ENCODE measurements at regions of chr3 and their contacts with region 1.

Region 1: DNA sequence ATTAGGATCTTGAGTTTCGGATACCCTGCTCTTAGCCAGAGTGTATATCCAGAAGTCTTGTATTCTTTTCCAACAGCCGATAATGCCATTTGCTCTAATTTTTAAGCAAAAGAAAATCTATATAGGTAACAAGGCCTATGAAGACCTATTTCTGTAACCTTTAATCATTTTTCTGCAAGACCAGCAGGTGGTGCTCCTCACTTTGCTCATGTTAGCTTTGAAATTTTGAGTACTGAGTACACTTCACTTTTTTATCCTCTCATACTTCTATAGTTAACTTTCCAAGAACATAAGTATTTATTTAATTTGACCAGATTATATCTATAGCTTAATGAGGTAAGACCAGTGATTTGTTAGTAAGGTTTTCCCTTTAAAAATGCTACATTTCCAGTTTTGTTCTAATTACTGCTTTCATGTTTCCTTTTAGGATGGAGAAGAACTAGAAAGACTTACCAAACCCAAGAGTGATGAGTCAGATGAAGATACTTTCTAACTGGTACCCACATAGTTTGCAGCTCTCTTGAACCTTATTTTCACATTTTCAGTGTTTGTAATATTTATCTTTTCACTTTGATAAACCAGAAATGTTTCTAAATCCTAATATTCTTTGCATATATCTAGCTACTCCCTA is 20.5 kb downstream of the SLC35A5 start:
- DNase-seq: peak; percentile 55
- H3K4me3 ChIP-seq: no peak overlapping the region
- H3K27ac ChIP-seq: no peak overlapping the region
- H3K27me3 ChIP-seq: no peaks in the 10 kb centered on the region
- CTCF ChIP-seq: peak; percentile 73

Region 2: GRCh38 chr3:111978493-111979433 is 603.6 kb before region 1 on chr3 and contains the start of gene ABHD10:
- CTCF ChIA-PET with region 1: no interaction called
- POLR2A ChIA-PET with region 1: no interaction called
- DNase-seq: peak; percentile 97
- H3K4me3 ChIP-seq: peak within 1 kb of the TSS; percentile 92
- H3K27ac ChIP-seq: peak within 1 kb of the TSS; percentile 47
- H3K27me3 ChIP-seq: no peaks in the 10 kb centered on the region
- CTCF ChIP-seq: no peak
- polyA plus RNA-seq, gene ABHD10: 28.8 and 37.5 TPM in 2 replicates

Region 3: DNA sequence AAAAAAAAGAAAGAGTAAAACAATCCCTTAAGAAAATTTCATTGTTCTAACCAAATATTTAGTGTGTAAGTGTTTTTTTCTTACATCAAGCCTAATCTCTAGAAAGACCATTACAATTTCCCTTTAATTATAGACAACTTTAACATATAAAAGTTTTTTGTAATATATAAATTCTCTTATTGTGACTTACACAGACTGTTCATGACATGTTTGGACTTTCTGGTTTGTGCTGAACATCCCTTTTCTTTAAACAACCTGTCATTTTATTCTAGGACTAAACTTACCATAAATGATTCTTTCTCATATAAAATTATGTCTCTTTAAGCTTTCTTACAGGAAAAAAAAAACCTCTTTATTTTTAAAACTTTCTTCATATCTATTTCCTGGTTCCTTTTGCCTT is 70.0 kb before region 1 on chr3:
- CTCF ChIA-PET with region 1: no interaction called
- POLR2A ChIA-PET with region 1: no interaction called
- DNase-seq: no peak
- H3K4me3 ChIP-seq: no peak overlapping the region
- H3K27ac ChIP-seq: no peak overlapping the region
- H3K27me3 ChIP-seq: no peaks in the 10 kb centered on the region
- CTCF ChIP-seq: no peak

Region 4: GRCh38 chr3:112561731-112562688 is 20.3 kb before region 1 on chr3 and contains the starts of genes ATG3 and SLC35A5:
- CTCF ChIA-PET with region 1: interaction called, 11 read pairs
- POLR2A ChIA-PET with region 1: no interaction called
- DNase-seq: peak; percentile 98
- H3K4me3 ChIP-seq: peak within 1 kb of the TSS; percentile 95
- H3K27ac ChIP-seq: peak within 1 kb of the TSS; percentile 99
- H3K27me3 ChIP-seq: no peaks in the 10 kb centered on the region
- CTCF ChIP-seq: no peak
- polyA plus RNA-seq, gene ATG3: 44.5 and 60.7 TPM in 2 replicates
- polyA plus RNA-seq, gene SLC35A5: 40.5 and 53.6 TPM in 2 replicates

Region 5: GRCh38 chr3:112598731-112599130 is 16.4 kb after region 1 on chr3:
- CTCF ChIA-PET with region 1: interaction called, 16 read pairs
- POLR2A ChIA-PET with region 1: interaction called, 3 read pairs
- DNase-seq: no peak
- H3K4me3 ChIP-seq: no peak overlapping the region
- H3K27ac ChIP-seq: no peak overlapping the region
- H3K27me3 ChIP-seq: no peaks in the 10 kb centered on the region
- CTCF ChIP-seq: no peak

Region 6: DNA sequence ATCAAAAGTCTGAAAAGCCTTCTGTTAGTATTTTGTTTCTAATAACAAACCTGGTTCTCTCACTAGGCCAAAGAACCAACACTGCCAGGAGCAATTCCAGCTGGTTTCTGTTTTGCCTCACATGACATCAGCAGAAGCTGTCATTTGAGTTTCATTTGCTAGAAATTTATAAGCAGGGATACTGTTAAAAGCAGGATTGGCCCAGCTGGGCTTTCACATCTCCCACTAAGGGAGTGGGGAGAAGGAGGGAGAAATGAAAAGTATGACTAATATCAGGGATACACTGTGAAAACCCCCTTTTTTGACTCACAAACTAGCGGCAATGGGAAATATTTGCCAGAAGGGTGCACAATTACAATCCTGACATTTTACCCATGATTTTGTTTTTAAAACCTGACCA is 53.3 kb after region 1 on chr3:
- CTCF ChIA-PET with region 1: interaction called, 32 read pairs
- POLR2A ChIA-PET with region 1: interaction called, 4 read pairs
- DNase-seq: peak; percentile 90
- H3K4me3 ChIP-seq: peak overlapping the region; percentile 85
- H3K27ac ChIP-seq: peak overlapping the region; percentile 91
- H3K27me3 ChIP-seq: no peaks in the 10 kb centered on the region
- CTCF ChIP-seq: peak; percentile 27; the same call in 1 of the 2 replicates

Region 7: GRCh38 chr3:112979240-112979832 is 397.0 kb after region 1 on chr3:
- CTCF ChIA-PET with region 1: interaction called, 37 read pairs
- POLR2A ChIA-PET with region 1: no interaction called
- DNase-seq: peak; percentile 11
- H3K4me3 ChIP-seq: no peak overlapping the region
- H3K27ac ChIP-seq: no peak overlapping the region
- H3K27me3 ChIP-seq: no peaks in the 10 kb centered on the region
- CTCF ChIP-seq: peak; percentile 69

Region 8: DNA sequence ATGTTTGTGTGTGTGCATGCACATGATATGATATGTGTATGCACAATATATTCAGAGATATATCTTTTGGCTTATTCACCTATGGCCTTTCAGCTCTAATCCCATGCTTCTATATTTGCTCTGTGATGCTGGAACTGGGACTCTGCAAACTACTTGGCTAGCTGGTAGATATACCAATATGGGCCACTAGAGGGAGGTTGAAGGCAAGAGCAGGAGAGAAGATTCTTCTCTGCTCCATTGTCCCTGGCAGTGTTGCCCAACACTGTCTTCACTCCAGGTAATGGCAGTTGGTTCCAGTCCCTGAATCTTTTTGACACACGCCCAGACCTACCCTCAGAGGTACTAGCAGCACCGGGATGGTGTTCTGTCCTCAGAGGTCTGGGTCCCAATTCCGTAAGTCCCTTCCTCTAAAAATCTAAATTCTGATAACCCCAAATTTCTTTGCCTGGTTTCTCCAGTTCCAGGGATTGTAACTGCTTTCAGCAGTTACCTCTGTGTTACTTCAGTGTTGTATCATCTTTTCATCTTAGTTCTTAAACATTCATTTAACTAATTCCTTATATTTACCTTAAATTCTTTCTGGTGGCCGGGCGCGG is 453.1 kb after region 1 on chr3:
- CTCF ChIA-PET with region 1: interaction called, 15 read pairs
- POLR2A ChIA-PET with region 1: no interaction called
- DNase-seq: no peak
- H3K4me3 ChIP-seq: no peak overlapping the region
- H3K27ac ChIP-seq: no peak overlapping the region
- H3K27me3 ChIP-seq: no peaks in the 10 kb centered on the region
- CTCF ChIP-seq: peak; percentile 94

Region 9: DNA sequence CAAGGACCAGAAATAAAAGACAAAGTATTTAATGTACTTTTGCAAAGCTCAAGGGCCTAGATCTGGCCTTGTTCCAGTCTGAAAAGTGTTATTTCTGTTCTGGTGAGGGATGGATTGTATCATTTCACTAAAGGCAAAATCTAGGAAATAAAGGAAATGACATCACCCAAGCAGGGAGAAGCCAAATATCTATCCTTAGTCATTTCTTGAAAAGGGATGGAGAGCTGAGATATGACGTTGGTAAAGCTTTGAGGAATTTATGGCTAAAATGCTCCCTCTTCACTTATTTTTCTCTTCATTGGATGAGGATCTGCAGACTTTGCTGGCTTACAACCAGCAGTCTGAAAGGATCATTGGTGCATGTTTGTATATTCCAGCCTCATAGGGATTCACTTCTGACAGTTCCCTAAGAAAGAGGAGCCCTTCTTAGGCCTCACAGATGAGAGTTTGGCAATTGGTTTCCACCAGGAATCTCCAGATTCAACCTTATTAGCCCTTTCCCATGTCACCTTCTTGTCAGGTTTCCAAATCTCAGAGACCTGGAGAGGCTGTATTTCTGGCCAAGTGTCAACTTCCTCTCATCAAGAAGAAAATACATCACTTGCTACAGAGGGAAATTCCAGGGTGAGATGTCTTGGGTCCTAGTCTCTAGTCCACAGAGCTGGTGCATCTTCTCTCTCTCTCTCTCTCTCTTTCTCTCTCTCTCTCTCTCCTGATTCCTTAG is 535.3 kb after region 1 on chr3:
- CTCF ChIA-PET with region 1: no interaction called
- POLR2A ChIA-PET with region 1: no interaction called
- DNase-seq: peak; percentile 63
- H3K4me3 ChIP-seq: no peak overlapping the region
- H3K27ac ChIP-seq: peak overlapping the region; percentile 55
- H3K27me3 ChIP-seq: no peaks in the 10 kb centered on the region
- CTCF ChIP-seq: no peak